Body of pancreas (tissue), 4 donors: ENCODE measurements at regions of chr20 and their contacts with region 1.

Region 1: GRCh38 chr20:5535125-5535771 is 215.0 kb upstream of the SHLD1 start:
- DNase-seq: peak in 1 of 4 donors; percentile 44
- ATAC-seq: no peak
- H3K4me3 ChIP-seq: no peak overlapping the region
- H3K27ac ChIP-seq: no peak overlapping the region
- H3K4me1 ChIP-seq: no peaks in the 10 kb centered on the region
- H3K27me3 ChIP-seq: no peaks in the 10 kb centered on the region
- CTCF ChIP-seq: no peak
- POLR2A ChIP-seq: no peak

Region 2: DNA sequence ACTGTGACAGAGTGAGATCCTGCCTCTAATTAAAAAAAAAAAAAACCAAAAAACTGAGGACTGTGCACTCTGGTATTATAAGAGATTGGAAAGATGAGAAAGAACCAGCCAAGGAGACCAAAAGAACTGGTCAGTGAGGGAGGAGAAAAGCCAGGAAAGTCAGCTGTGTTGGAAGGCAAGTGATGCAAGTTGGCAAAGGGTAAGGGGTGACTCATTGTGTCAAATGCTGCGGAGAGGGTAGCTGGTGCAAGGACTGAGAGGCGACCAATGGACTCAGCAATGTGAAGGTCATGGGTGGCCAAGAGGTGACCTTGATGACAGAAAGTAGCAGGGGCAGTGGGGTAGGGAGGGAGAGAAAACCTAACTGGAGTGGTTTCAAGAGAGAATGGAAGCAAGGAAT is 546.0 kb after region 1 on chr20:
- intact Hi-C with region 1: loop called (anchors 5 kb)
- DNase-seq: peak in 2 of 4 donors; percentile 11 to 46
- ATAC-seq: no peak
- H3K4me3 ChIP-seq: no peak overlapping the region
- H3K27ac ChIP-seq: no peak overlapping the region
- H3K4me1 ChIP-seq: peaks cover 2% of the 10 kb centered on the region
- H3K27me3 ChIP-seq: no peaks in the 10 kb centered on the region
- CTCF ChIP-seq: no peak
- POLR2A ChIP-seq: no peak